K562 (cell line): ENCODE measurements at regions of chr2 and their contacts with region 1.

Region 1: DNA sequence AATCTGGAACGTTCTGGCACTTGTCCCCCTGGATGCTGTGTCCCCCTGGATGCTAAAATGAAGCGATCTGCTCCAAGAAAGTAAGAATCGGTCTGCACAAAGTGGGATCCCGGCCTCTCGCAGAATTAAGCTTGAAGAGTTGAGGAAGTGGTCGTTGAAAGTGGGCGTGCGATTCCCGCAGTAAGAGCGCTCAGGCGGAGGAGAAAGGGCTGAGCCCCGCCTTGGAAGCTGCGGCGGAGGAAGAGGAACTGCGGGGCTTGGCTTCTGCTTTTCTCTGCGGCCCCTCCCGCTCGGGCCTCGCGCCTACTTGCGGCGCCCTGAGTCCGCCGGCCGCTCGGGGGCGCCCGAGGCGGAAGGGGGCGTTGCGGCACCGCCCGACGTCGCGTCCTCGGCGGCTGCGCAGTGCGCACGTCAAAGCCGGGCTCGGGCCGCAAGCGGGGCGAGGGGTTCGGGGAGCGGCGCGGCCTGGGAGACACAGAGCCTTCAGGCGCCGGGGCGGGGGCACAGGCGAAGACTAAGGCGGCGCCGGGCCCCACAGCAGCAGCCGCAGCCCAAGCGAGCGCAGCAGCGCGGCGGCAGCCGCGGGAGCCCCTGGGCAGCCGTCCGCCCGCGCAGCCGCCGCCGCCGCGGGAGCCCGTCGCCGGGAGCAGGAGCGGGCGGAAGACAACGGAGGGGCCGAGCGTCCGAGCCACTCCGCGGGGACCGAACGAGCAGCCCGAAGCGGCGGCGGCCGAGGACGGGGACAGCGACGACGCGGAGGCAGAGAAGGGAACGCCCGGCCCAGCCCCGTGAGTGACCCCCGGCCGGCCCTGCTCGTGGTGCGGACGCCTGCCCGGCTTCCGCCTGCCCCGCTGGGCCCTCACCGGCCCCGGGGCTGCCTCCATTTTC is at the start of gene CAB39:
- DNase-seq: peak; percentile 84 to 91 (median 86)
- ATAC-seq: peak; percentile 86
- H3K4me3 ChIP-seq: peak within 1 kb of the TSS; percentile 84
- H3K27ac ChIP-seq: peak within 1 kb of the TSS; percentile 95
- H3K4me1 ChIP-seq: peaks cover 18 to 21% of the 10 kb centered on the region in 2 experiments; a peak in 4 of 5 replicates
- H3K27me3 ChIP-seq: no peaks in the 10 kb centered on the region
- CTCF ChIP-seq: peak; percentile 66 to 89 (median 79)
- EP300 ChIP-seq: no peak; the same call in 1 of the 2 replicates
- POLR2A ChIP-seq: peak; percentile 21; the same call in 1 of the 2 replicates
- RAD21 ChIP-seq: peak in 1 of 2 experiments; percentile 50; a peak in 2 of 4 replicates
- polyA plus RNA-seq, gene CAB39: 27.2 to 37.4 TPM

Region 2: GRCh38 chr2:229501051-229501794 is 1211.5 kb before region 1 on chr2:
- CTCF ChIA-PET with region 1: no interaction called
- POLR2A ChIA-PET with region 1: no interaction called
- in situ Hi-C with region 1: no loop called
- intact Hi-C with region 1: no loop called
- DNase-seq: no peak
- ATAC-seq: no peak
- H3K4me3 ChIP-seq: no peak overlapping the region
- H3K27ac ChIP-seq: no peak overlapping the region
- H3K4me1 ChIP-seq: no peaks in the 10 kb centered on the region
- H3K27me3 ChIP-seq: no peaks in the 10 kb centered on the region
- CTCF ChIP-seq: no peak
- EP300 ChIP-seq: no peak
- POLR2A ChIP-seq: no peak
- RAD21 ChIP-seq: no peak

Region 3: GRCh38 chr2:230411570-230412370 is 300.9 kb before region 1 on chr2:
- CTCF ChIA-PET with region 1: no interaction called
- POLR2A ChIA-PET with region 1: interaction called, 3 read pairs
- in situ Hi-C with region 1: no loop called
- intact Hi-C with region 1: loop called (anchors 10 kb)
- DNase-seq: peak; percentile 64 to 79 (median 76)
- ATAC-seq: peak; percentile 81
- H3K4me3 ChIP-seq: peak overlapping the region; percentile 42
- H3K27ac ChIP-seq: peak overlapping the region; percentile 70
- H3K4me1 ChIP-seq: peaks cover 16 to 23% of the 10 kb centered on the region in 2 experiments; a peak in 4 of 5 replicates
- H3K27me3 ChIP-seq: no peaks in the 10 kb centered on the region
- CTCF ChIP-seq: no peak
- EP300 ChIP-seq: no peak
- POLR2A ChIP-seq: peak; percentile 64
- RAD21 ChIP-seq: no peak

Region 4: GRCh38 chr2:230658877-230659652 is 53.6 kb before region 1 on chr2:
- CTCF ChIA-PET with region 1: interaction called, 3 read pairs
- POLR2A ChIA-PET with region 1: interaction called, 8 read pairs
- in situ Hi-C with region 1: no loop called
- intact Hi-C with region 1: loop called (anchors 2 kb)
- DNase-seq: peak; percentile 69 to 92 (median 78)
- ATAC-seq: peak; percentile 82
- H3K4me3 ChIP-seq: peak overlapping the region; percentile 52
- H3K27ac ChIP-seq: peak overlapping the region; percentile 100
- H3K4me1 ChIP-seq: peaks cover 55 to 60% of the 10 kb centered on the region in 2 experiments
- H3K27me3 ChIP-seq: no peaks in the 10 kb centered on the region
- CTCF ChIP-seq: no peak
- EP300 ChIP-seq: peak; percentile 99
- POLR2A ChIP-seq: peak; percentile 81
- RAD21 ChIP-seq: 0 out of 4 replicates have a peak, but pooled peaks of 1 of the 2 experiments have one; percentile 13

Region 5: GRCh38 chr2:230731512-230731911 is 18.8 kb after region 1 on chr2:
- CTCF ChIA-PET with region 1: no interaction called
- POLR2A ChIA-PET with region 1: interaction called, 10 read pairs
- in situ Hi-C with region 1: no loop called
- intact Hi-C with region 1: no loop called
- DNase-seq: no peak
- ATAC-seq: no peak
- H3K4me3 ChIP-seq: no peak overlapping the region
- H3K27ac ChIP-seq: no peak overlapping the region
- H3K4me1 ChIP-seq: peaks cover 4 to 21% of the 10 kb centered on the region in 2 experiments; a peak in 4 of 5 replicates
- H3K27me3 ChIP-seq: no peaks in the 10 kb centered on the region
- CTCF ChIP-seq: no peak
- EP300 ChIP-seq: no peak
- POLR2A ChIP-seq: no peak
- RAD21 ChIP-seq: no peak

Region 6: GRCh38 chr2:230762317-230762896 is 49.7 kb after region 1 on chr2:
- CTCF ChIA-PET with region 1: no interaction called
- POLR2A ChIA-PET with region 1: no interaction called
- in situ Hi-C with region 1: no loop called
- intact Hi-C with region 1: loop called (anchors 5 kb)
- DNase-seq: peak; percentile 20 to 55 (median 30)
- ATAC-seq: peak; percentile 93
- H3K4me3 ChIP-seq: no peak overlapping the region
- H3K27ac ChIP-seq: no peak overlapping the region
- H3K4me1 ChIP-seq: peaks cover 0 to 17% of the 10 kb centered on the region in 2 experiments; a peak in 4 of 5 replicates
- H3K27me3 ChIP-seq: no peaks in the 10 kb centered on the region
- CTCF ChIP-seq: peak; percentile 48 to 88 (median 55); a peak in 5 of 6 replicates
- EP300 ChIP-seq: no peak
- POLR2A ChIP-seq: no peak
- RAD21 ChIP-seq: peak in 1 of 2 experiments; percentile 44; a peak in 2 of 4 replicates

Region 7: DNA sequence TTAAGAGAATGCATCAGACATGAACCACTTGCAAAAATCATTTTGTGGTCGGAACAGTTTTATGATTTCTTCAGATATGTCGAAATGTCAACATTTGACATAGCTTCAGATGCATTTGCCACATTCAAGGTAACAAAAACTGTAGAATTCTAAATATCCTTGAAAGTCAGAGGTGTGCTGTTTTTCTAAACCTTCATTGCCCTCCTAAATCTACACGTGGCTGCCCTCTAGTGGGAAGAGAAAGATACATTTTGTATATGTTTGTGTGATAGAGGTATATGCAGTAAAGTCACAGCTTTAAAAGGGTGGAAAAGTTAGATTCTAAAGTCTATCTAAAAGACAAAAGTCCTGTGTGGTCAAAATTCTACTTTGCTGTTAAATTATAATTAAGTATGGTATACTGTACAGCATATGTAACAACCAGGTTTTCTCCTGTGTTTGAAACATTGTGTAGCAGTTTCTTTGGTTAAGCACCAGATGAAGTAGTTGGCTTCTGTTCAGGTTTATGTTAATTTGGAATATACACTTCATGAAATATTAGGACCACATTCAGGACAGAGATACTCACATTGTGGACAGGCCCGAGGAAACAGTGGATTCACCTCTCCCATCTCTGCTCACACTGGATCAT is 86.2 kb after region 1 on chr2:
- CTCF ChIA-PET with region 1: no interaction called
- POLR2A ChIA-PET with region 1: no interaction called
- in situ Hi-C with region 1: no loop called
- intact Hi-C with region 1: loop called (anchors 2 kb)
- DNase-seq: peak; percentile 22 to 50 (median 28)
- ATAC-seq: peak; percentile 83
- H3K4me3 ChIP-seq: no peak overlapping the region
- H3K27ac ChIP-seq: no peak overlapping the region
- H3K4me1 ChIP-seq: peaks cover 4 to 13% of the 10 kb centered on the region in 2 experiments; a peak in 3 of 5 replicates
- H3K27me3 ChIP-seq: no peaks in the 10 kb centered on the region
- CTCF ChIP-seq: peak; percentile 35 to 58 (median 46); a peak in 5 of 6 replicates
- EP300 ChIP-seq: no peak
- POLR2A ChIP-seq: no peak
- RAD21 ChIP-seq: peak; percentile 52 to 72